AG04450 (cell line): ENCODE measurements at regions of chr5 and their contacts with region 1.

Region 1: DNA sequence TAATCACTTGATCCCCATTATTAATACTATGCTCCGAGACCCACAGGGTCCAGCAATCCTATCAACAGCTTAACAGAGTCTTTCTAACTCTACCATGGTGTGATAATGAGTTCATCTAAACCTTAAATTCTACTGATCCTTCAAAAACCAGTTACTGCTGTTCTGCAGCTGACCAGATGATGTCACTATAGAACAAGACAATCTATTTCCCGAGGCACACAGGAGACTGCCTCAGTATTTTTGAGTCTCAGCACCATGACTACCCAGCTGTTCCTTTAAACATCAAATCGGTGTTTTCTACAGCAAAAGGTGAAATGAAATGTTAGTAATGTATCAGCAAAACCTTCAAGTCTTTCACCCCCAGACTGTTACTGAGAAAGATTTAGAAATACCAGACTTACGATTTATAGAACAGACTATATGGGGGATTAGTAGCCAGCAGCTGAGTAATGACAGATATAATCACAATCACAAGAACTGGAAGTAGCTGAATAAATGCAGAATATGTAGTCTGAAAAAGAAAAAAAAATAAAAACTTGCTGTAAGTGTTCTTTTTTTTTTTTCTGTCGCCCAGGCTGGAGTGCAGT is 16.9 kb downstream of the DNAJC18 start:
- DNase-seq: peak; percentile 51
- H3K4me3 ChIP-seq: no peak overlapping the region
- H3K27ac ChIP-seq: no peak overlapping the region
- H3K27me3 ChIP-seq: no peaks in the 10 kb centered on the region
- CTCF ChIP-seq: peak; percentile 90

Region 2: GRCh38 chr5:139410993-139411828 is 11.2 kb before region 1 on chr5:
- CTCF ChIA-PET with region 1: interaction called, 17 read pairs
- POLR2A ChIA-PET with region 1: no interaction called
- DNase-seq: no peak
- H3K4me3 ChIP-seq: no peak overlapping the region
- H3K27ac ChIP-seq: no peak overlapping the region
- H3K27me3 ChIP-seq: no peaks in the 10 kb centered on the region
- CTCF ChIP-seq: no peak

Region 3: GRCh38 chr5:139439013-139439903 is 16.9 kb after region 1 on chr5 and contains the start of gene DNAJC18:
- CTCF ChIA-PET with region 1: interaction called, 14 read pairs
- POLR2A ChIA-PET with region 1: no interaction called
- DNase-seq: peak; percentile 78
- H3K4me3 ChIP-seq: peak within 1 kb of the TSS; percentile 95
- H3K27ac ChIP-seq: peak within 1 kb of the TSS; percentile 89
- H3K27me3 ChIP-seq: no peaks in the 10 kb centered on the region
- CTCF ChIP-seq: no peak
- polyA plus RNA-seq, gene DNAJC18: 12.7 and 17.7 TPM in 2 replicates

Region 4: GRCh38 chr5:139495638-139496435 is 73.4 kb after region 1 on chr5:
- CTCF ChIA-PET with region 1: interaction called, 14 read pairs
- POLR2A ChIA-PET with region 1: interaction called, 4 read pairs
- DNase-seq: no peak
- H3K4me3 ChIP-seq: no peak overlapping the region
- H3K27ac ChIP-seq: peak overlapping the region; percentile 12
- H3K27me3 ChIP-seq: no peaks in the 10 kb centered on the region
- CTCF ChIP-seq: no peak

Region 5: DNA sequence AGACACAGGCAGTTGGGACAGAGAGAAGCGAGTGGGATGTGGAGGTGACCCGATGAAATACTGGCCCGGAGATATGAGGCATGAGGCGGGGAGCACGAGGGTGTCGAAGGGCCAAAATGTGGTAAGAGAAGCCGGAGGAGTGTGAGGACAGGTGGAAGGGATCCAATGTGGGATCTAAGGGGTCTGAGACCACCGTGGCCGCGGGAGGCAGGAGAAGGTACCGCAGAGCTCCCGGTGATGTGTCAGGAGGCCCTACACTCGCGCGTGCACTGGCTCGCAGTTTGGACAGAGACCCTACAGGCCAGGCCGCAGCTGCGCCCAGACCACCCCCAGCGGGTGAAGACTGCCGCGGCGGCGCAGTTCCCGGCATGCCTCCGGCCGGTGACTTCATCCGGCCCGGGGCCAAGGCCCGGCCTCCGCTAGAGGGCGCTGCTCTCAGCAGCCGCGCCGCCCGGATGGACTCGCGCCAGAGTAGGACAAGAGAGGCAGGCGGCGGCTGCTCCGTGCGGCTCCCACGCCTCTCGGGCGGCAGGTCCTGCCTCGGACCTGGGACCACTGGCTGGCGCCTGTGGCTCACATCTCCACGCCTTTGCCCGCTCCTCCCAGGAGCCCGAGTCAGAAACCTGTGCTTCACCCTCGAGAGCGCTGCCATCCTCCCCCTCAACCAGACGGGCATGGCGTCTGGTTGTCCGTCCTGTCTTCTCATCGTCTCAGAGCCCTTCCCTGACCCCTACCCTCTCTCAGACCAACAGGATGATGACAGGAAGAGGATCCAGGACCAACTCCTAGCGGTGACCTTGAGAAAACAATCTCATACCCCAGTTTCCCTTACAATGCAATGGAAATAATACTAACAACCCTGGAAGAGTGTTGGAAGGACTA is 95.5 kb after region 1 on chr5:
- CTCF ChIA-PET with region 1: interaction called, 231 read pairs
- POLR2A ChIA-PET with region 1: interaction called, 3 read pairs
- DNase-seq: peak; percentile 47
- H3K4me3 ChIP-seq: peak overlapping the region; percentile 64
- H3K27ac ChIP-seq: peak overlapping the region; percentile 52
- H3K27me3 ChIP-seq: no peaks in the 10 kb centered on the region
- CTCF ChIP-seq: peak; percentile 89

Region 6: DNA sequence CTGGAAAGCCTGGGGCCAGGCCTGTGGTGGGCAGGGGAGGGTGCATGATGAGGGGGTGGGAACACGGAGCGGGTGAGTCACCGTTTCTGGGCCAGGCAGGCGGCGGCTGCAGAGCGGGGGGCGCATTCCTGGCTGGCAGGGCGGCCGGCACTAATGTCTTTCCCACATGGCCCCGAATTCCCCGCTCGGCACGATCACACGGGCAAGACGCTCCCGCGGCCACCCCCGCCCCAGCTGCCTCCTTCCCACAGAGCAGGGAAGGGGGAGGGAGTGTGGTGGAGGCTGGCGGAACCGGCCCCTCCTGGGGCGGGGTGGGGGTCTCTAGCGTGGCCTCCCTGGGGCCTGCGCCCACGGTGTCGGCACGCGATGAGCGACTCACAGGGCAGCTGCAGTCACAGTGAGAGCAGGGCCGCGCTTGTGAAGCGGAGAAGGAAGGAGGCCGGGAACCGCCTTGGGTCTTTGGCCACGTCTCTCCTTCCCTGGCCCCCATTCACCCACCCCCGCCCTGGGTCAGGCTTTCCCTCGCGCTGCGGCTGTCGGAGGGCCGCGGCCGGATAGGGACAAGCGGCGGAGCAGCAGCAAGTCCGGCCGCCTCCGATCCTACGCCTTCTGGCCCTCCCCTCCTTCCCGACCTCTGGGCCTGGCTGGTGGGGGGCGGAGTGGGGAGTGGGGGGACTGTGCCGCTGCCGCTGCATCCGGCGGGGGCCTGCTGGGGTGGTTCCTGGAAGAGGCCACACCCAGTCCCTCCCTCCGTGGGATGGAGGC is 274.7 kb after region 1 on chr5:
- CTCF ChIA-PET with region 1: no interaction called
- POLR2A ChIA-PET with region 1: no interaction called
- DNase-seq: peak; percentile 68
- H3K4me3 ChIP-seq: peak overlapping the region; percentile 53
- H3K27ac ChIP-seq: peak overlapping the region; percentile 96
- H3K27me3 ChIP-seq: no peaks in the 10 kb centered on the region
- CTCF ChIP-seq: no peak